MCF 10A (cell line): ENCODE measurements at regions of chr5 and their contacts with region 1.

Region 1: GRCh38 chr5:44862808-44863207 is 54.1 kb downstream of the MRPS30 start:
- DNase-seq: peak; percentile 36
- H3K4me3 Mint-ChIP-seq: no peak overlapping the region
- H3K27ac Mint-ChIP-seq: no peak overlapping the region
- H3K4me1 Mint-ChIP-seq: no peaks in the 10 kb centered on the region
- H3K27me3 Mint-ChIP-seq: no peaks in the 10 kb centered on the region
- CTCF ChIP-seq: peak; percentile 49

Region 2: GRCh38 chr5:45521067-45521466 is 658.3 kb after region 1 on chr5:
- CTCF ChIA-PET with region 1: no interaction called
- POLR2A ChIA-PET with region 1: no interaction called
- intact Hi-C with region 1: loop called (anchors 1 kb)
- DNase-seq: peak; percentile 74
- H3K4me3 Mint-ChIP-seq: no peak overlapping the region
- H3K27ac Mint-ChIP-seq: no peak overlapping the region
- H3K4me1 Mint-ChIP-seq: no peaks in the 10 kb centered on the region
- H3K27me3 Mint-ChIP-seq: no peaks in the 10 kb centered on the region
- CTCF ChIP-seq: peak; percentile 75

Region 3: GRCh38 chr5:45639038-45639437 is 776.2 kb after region 1 on chr5:
- CTCF ChIA-PET with region 1: no interaction called
- POLR2A ChIA-PET with region 1: no interaction called
- intact Hi-C with region 1: loop called (anchors 10 kb)
- DNase-seq: peak; percentile 7
- H3K4me3 Mint-ChIP-seq: no peak overlapping the region
- H3K27ac Mint-ChIP-seq: no peak overlapping the region
- H3K4me1 Mint-ChIP-seq: peaks cover 11% of the 10 kb centered on the region
- H3K27me3 Mint-ChIP-seq: no peaks in the 10 kb centered on the region
- CTCF ChIP-seq: peak; percentile 34

Region 4: GRCh38 chr5:45774528-45774927 is 911.7 kb after region 1 on chr5:
- CTCF ChIA-PET with region 1: interaction called, 3 read pairs
- POLR2A ChIA-PET with region 1: no interaction called
- intact Hi-C with region 1: loop called (anchors 2 kb)
- DNase-seq: peak; percentile 24
- H3K4me3 Mint-ChIP-seq: no peak overlapping the region
- H3K27ac Mint-ChIP-seq: no peak overlapping the region
- H3K4me1 Mint-ChIP-seq: no peaks in the 10 kb centered on the region
- H3K27me3 Mint-ChIP-seq: no peaks in the 10 kb centered on the region
- CTCF ChIP-seq: peak; percentile 50